ENCODE measurements at regions of chr11 and their contacts with region 1.

Region 1: GRCh38 chr11:207208-207862 is at the starts of genes BET1L and RIC8A:
- DNase-seq: peak; percentile 95 to 98 (median 97)
- ATAC-seq: peak; percentile 90 to 95 (median 94)
- H3K4me3 ChIP-seq: peak within 1 kb of the TSS; percentile 65 to 100 (median 89)
- H3K27ac ChIP-seq: peak within 1 kb of the TSS; percentile 96 to 100 (median 99)
- H3K4me1 ChIP-seq: peaks cover 19 to 59% (median 38%) of the 10 kb centered on the region in 12 donors
- H3K27me3 ChIP-seq: no peaks in the 10 kb centered on the region
- CTCF ChIP-seq: peak in 2 of 12 donors; percentile 14 to 16
- POLR2A ChIP-seq: peak; percentile 47 to 91
- total RNA-seq, gene BET1L: 16.4 to 32.2 (median 20.9) TPM
- total RNA-seq, gene RIC8A: 48.7 to 94.1 (median 74.3) TPM

Region 2: DNA sequence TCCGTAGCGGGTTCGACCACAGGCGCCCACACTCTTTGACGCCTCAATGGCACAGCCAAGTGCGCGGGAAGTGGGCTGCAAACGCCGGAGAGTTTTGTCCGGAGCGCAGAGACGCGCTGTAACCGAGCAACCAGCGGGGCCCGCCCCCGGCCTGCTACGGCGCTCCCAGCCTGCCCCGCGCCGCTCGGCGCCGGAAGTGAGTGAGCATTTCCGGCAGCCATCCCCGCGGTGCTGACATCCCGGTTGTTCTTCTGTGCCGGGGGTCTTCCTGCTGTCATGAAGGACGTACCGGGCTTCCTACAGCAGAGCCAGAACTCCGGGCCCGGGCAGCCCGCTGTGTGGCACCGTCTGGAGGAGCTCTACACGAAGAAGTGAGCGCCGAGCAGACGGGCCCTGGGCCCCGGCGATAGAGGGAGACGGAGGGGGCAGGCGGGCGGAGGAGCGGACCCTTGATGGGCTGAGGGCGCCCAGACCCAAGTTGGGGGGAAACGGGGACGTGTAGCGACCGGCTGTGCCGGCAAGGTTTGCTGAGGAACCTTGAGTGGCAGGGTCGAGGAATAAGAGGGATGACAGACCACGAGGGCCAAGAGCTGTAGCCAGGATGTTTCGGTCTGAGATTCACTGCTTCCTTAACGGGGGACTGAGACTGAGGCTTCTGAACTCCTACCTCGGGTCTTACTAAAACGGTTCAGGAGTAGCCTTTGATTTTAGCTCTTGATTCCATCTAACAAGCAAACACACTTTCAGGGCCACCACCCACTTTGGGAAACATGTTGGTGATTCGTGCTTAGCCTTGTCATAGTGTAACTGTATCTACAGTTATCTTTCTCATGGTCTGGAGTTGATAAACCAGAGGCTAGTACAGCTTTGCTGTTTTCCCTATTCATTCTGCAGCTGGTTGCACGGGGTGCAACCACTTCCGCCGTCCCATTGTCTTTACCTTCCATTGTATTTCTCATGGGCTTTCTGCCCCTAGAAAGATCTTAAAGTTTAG is 29.7 kb after region 1 on chr11 and contains the start of gene PSMD13:
- intact Hi-C with region 1: loop called in 6 of 10 experiments (anchors 1 to 2 kb)
- DNase-seq: peak; percentile 89 to 93 (median 90)
- ATAC-seq: peak; percentile 93 to 97 (median 94)
- H3K4me3 ChIP-seq: peak within 1 kb of the TSS; percentile 83 to 100 (median 94)
- H3K27ac ChIP-seq: peak within 1 kb of the TSS; percentile 91 to 98 (median 95)
- H3K4me1 ChIP-seq: peaks cover 9 to 52% (median 30%) of the 10 kb centered on the region in 12 donors
- H3K27me3 ChIP-seq: no peaks in the 10 kb centered on the region
- CTCF ChIP-seq: peak in 1 of 12 donors; percentile 16
- POLR2A ChIP-seq: peak in 1 of 2 donors; percentile 45
- total RNA-seq, gene PSMD13: 75.1 to 110 (median 87.5) TPM

Region 3: DNA sequence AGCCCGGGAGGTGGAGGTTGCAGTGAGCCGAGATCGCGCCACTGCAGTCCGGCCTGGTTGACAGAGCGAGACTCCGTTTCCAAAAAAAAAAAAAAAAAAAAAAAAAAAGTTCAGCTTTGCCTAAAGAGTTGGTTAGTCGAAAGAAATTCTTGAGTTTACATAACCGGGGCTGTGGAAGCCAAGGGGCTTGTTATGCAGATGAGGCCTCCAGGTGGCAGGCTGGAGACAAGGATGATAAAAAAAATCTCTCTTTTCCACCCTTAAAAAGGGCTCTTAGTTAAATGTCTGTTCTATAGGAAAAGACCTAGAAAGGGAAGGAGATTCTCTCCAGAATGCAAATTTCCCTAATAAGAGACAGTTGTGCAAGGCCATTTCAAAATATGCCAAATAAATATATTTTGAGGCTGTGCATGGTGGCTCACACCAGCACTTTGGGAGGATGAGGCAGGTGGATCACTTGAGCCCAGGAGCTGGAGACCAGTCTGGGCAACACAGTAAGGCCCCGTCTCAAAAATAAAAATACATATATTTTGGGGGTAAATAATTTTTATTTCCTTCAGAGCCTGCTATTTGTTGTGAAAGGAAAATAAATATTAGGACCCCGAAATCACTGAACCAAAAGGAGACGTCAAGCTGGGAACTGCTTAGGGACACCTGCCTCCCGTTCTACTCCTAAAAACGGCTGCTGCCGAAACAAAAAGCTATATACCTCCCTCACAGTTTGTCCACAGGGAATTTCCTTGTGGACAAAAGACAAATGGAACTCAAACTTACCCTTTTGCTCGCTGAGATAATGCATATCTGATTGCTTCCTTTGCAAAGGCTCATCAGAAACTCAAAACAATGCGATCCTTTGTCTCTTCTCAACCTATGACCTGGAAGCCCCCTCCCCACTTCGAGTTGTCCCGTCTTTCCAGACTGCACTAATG is 97.8 kb after region 1 on chr11:
- intact Hi-C with region 1: loop called in 2 of 10 experiments (anchors 5 kb)
- DNase-seq: peak in 4 of 5 donors; percentile 59 to 73 (median 68)
- ATAC-seq: peak in 1 of 4 donors; percentile 19
- H3K4me3 ChIP-seq: no peak overlapping the region
- H3K27ac ChIP-seq: peak overlapping the region in 6 of 12 donors; percentile 11 to 99 (median 62)
- H3K4me1 ChIP-seq: peaks cover 0 to 42% (median 15%) of the 10 kb centered on the region in 12 donors
- H3K27me3 ChIP-seq: peaks cover 0 to 21% (median 4%) of the 10 kb centered on the region in 9 donors
- CTCF ChIP-seq: peak; percentile 55 to 76 (median 64)
- POLR2A ChIP-seq: no peak

Region 4: GRCh38 chr11:355581-356458 is 148.5 kb after region 1 on chr11:
- intact Hi-C with region 1: loop called in 4 of 10 experiments (anchors 5 to 10 kb)
- DNase-seq: peak; percentile 95 to 97 (median 97)
- ATAC-seq: peak; percentile 75 to 91 (median 89)
- H3K4me3 ChIP-seq: peak overlapping the region in 11 of 12 donors; percentile 1 to 60 (median 48)
- H3K27ac ChIP-seq: peak overlapping the region; percentile 95 to 100 (median 99)
- H3K4me1 ChIP-seq: peaks cover 7 to 43% (median 30%) of the 10 kb centered on the region in 12 donors
- H3K27me3 ChIP-seq: peaks cover 0 to 7% (median 0%) of the 10 kb centered on the region in 9 donors
- CTCF ChIP-seq: peak in 1 of 12 donors; percentile 8
- POLR2A ChIP-seq: peak in 1 of 2 donors; percentile 70

Region 5: GRCh38 chr11:447923-448731 is 240.8 kb after region 1 on chr11:
- intact Hi-C with region 1: loop called in 4 of 10 experiments (anchors 5 to 10 kb)
- DNase-seq: peak; percentile 95 to 98 (median 95)
- ATAC-seq: peak; percentile 85 to 90 (median 86)
- H3K4me3 ChIP-seq: peak overlapping the region; percentile 26 to 92 (median 64)
- H3K27ac ChIP-seq: peak overlapping the region; percentile 77 to 97 (median 93)
- H3K4me1 ChIP-seq: peaks cover 0 to 45% (median 28%) of the 10 kb centered on the region in 12 donors
- H3K27me3 ChIP-seq: peaks cover 0 to 3% (median 0%) of the 10 kb centered on the region in 9 donors
- CTCF ChIP-seq: peak; percentile 64 to 98 (median 84)
- POLR2A ChIP-seq: peak in 1 of 2 donors; percentile 82

Region 6: GRCh38 chr11:518463-519250 is 311.3 kb after region 1 on chr11:
- intact Hi-C with region 1: loop called in 1 of 10 experiments (anchors 10 kb)
- DNase-seq: peak; percentile 86 to 95 (median 92)
- ATAC-seq: peak; percentile 85 to 98 (median 98)
- H3K4me3 ChIP-seq: peak overlapping the region in 10 of 12 donors; percentile 2 to 49 (median 32)
- H3K27ac ChIP-seq: peak overlapping the region in 11 of 12 donors; percentile 34 to 83 (median 73)
- H3K4me1 ChIP-seq: peaks cover 0 to 10% (median 4%) of the 10 kb centered on the region in 12 donors
- H3K27me3 ChIP-seq: no peaks in the 10 kb centered on the region
- CTCF ChIP-seq: peak in 11 of 12 donors; percentile 96 to 100 (median 100)
- POLR2A ChIP-seq: peak in 1 of 2 donors; percentile 61